Naive thymus-derived CD4-positive, alpha-beta T cell (primary cell): ENCODE measurements at regions of chr4 and their contacts with region 1.

Region 1: GRCh38 chr4:67545199-67546003 is at the start of gene CENPC:
- DNase-seq: peak; percentile 74 to 91 (median 87)
- ATAC-seq: peak; percentile 94
- H3K4me3 ChIP-seq: peak within 1 kb of the TSS; percentile 94
- H3K4me3 Mint-ChIP-seq: peak within 1 kb of the TSS; percentile 92 to 100 (median 98)
- H3K27ac ChIP-seq: peak within 1 kb of the TSS; percentile 98
- H3K27ac Mint-ChIP-seq: peak within 1 kb of the TSS; percentile 98 to 100 (median 100)
- H3K4me1 ChIP-seq: peaks cover 5 to 24% of the 10 kb centered on the region in 2 donors
- H3K4me1 Mint-ChIP-seq: peaks cover 16 to 60% (median 41%) of the 10 kb centered on the region in 7 donors
- H3K27me3 ChIP-seq: no peaks in the 10 kb centered on the region
- H3K27me3 Mint-ChIP-seq: no peaks in the 10 kb centered on the region
- total RNA-seq, gene CENPC: 33.9 to 89.7 (median 63.8) TPM

Region 2: GRCh38 chr4:67522851-67523671 is 22.3 kb before region 1 on chr4:
- CTCF ChIA-PET with region 1: interaction called, 3 read pairs
- POLR2A ChIA-PET with region 1: interaction called, 4 read pairs
- intact Hi-C with region 1: loop called in 1 of 2 experiments (anchors 1 kb)
- DNase-seq: peak in 1 of 9 donors; percentile 35
- ATAC-seq: peak; percentile 64
- H3K4me3 ChIP-seq: no peak overlapping the region
- H3K4me3 Mint-ChIP-seq: peak overlapping the region in 5 of 10 donors; percentile 12 to 57 (median 27)
- H3K27ac ChIP-seq: no peak overlapping the region
- H3K27ac Mint-ChIP-seq: peak overlapping the region in 7 of 9 donors; percentile 24 to 94 (median 48)
- H3K4me1 ChIP-seq: peaks cover 0 to 4% of the 10 kb centered on the region in 2 donors
- H3K4me1 Mint-ChIP-seq: peaks cover 46 to 82% (median 60%) of the 10 kb centered on the region in 7 donors
- H3K27me3 ChIP-seq: no peaks in the 10 kb centered on the region
- H3K27me3 Mint-ChIP-seq: no peaks in the 10 kb centered on the region

Region 3: GRCh38 chr4:67581208-67581857 is 35.9 kb after region 1 on chr4:
- CTCF ChIA-PET with region 1: interaction called, 10 read pairs
- POLR2A ChIA-PET with region 1: interaction called, 16 read pairs
- intact Hi-C with region 1: loop called (anchors 1 kb)
- DNase-seq: peak in 7 of 9 donors; percentile 61 to 77 (median 69)
- ATAC-seq: peak; percentile 95
- H3K4me3 ChIP-seq: peak overlapping the region; percentile 10
- H3K4me3 Mint-ChIP-seq: peak overlapping the region; percentile 34 to 92 (median 76)
- H3K27ac ChIP-seq: peak overlapping the region; percentile 28
- H3K27ac Mint-ChIP-seq: peak overlapping the region; percentile 55 to 93 (median 87)
- H3K4me1 ChIP-seq: peaks cover 8 to 26% of the 10 kb centered on the region in 2 donors
- H3K4me1 Mint-ChIP-seq: peaks cover 22 to 73% (median 56%) of the 10 kb centered on the region in 7 donors
- H3K27me3 ChIP-seq: no peaks in the 10 kb centered on the region
- H3K27me3 Mint-ChIP-seq: no peaks in the 10 kb centered on the region

Region 4: GRCh38 chr4:67668315-67668714 is 122.9 kb after region 1 on chr4:
- CTCF ChIA-PET with region 1: no interaction called
- POLR2A ChIA-PET with region 1: no interaction called
- intact Hi-C with region 1: loop called in 1 of 2 experiments (anchors 2 kb)
- DNase-seq: no peak
- ATAC-seq: no peak
- H3K4me3 ChIP-seq: no peak overlapping the region
- H3K4me3 Mint-ChIP-seq: no peak overlapping the region
- H3K27ac ChIP-seq: no peak overlapping the region
- H3K27ac Mint-ChIP-seq: no peak overlapping the region
- H3K4me1 ChIP-seq: no peaks in the 10 kb centered on the region
- H3K4me1 Mint-ChIP-seq: peaks cover 0 to 4% (median 0%) of the 10 kb centered on the region in 7 donors
- H3K27me3 ChIP-seq: no peaks in the 10 kb centered on the region
- H3K27me3 Mint-ChIP-seq: no peaks in the 10 kb centered on the region

Region 5: GRCh38 chr4:67762086-67762485 is 216.7 kb after region 1 on chr4:
- CTCF ChIA-PET with region 1: no interaction called
- POLR2A ChIA-PET with region 1: no interaction called
- intact Hi-C with region 1: loop called in 1 of 2 experiments (anchors 5 kb)
- DNase-seq: peak in 3 of 9 donors; percentile 0 to 11 (median 2)
- ATAC-seq: no peak
- H3K4me3 ChIP-seq: no peak overlapping the region
- H3K4me3 Mint-ChIP-seq: peak overlapping the region in 1 of 10 donors; percentile 38
- H3K27ac ChIP-seq: no peak overlapping the region
- H3K27ac Mint-ChIP-seq: peak overlapping the region in 2 of 9 donors; percentile 18 to 54
- H3K4me1 ChIP-seq: no peaks in the 10 kb centered on the region
- H3K4me1 Mint-ChIP-seq: peaks cover 4 to 6% (median 4%) of the 10 kb centered on the region in 7 donors
- H3K27me3 ChIP-seq: no peaks in the 10 kb centered on the region
- H3K27me3 Mint-ChIP-seq: no peaks in the 10 kb centered on the region

Region 6: GRCh38 chr4:67869580-67870190 is 324.3 kb after region 1 on chr4:
- CTCF ChIA-PET with region 1: no interaction called
- POLR2A ChIA-PET with region 1: no interaction called
- intact Hi-C with region 1: no loop called
- DNase-seq: no peak
- ATAC-seq: no peak
- H3K4me3 ChIP-seq: no peak overlapping the region
- H3K4me3 Mint-ChIP-seq: no peak overlapping the region
- H3K27ac ChIP-seq: no peak overlapping the region
- H3K27ac Mint-ChIP-seq: no peak overlapping the region
- H3K4me1 ChIP-seq: no peaks in the 10 kb centered on the region
- H3K4me1 Mint-ChIP-seq: no peaks in the 10 kb centered on the region
- H3K27me3 ChIP-seq: no peaks in the 10 kb centered on the region
- H3K27me3 Mint-ChIP-seq: peaks cover 0 to 33% (median 13%) of the 10 kb centered on the region in 5 donors

Region 7: DNA sequence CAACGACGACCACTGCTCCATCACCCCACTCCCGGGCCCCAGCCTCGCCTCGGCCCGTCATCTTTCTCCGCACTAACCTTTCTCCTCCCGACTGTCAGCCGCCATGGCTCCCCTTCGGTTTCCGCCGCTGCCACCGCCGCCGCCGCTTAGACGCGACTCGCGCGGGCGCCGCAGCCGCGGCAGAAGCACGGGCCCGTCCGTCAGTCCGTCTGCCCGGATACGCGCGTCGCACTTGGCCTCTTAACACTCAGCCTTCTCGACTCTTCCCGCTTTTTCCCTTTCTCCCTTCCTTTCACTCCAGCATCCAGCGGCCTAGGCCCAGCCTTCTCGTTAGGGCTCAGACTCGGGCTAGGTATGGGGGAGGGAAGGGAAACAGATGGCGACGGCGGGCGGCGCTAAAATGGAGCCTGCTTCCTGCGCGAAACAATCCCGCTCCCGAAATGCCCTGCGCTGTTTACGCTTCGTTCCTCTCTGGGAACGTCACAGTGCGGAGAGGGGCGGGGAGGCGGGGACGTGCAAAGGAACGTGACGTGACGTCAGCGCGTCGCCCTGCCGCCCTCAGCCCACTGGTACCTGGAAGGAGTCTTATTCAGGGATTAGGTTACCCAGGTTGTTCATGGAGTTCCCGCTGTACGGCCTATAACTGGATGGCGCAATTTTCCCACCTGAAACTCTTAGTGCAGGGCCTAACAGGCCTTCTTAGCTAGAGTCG is 804.4 kb after region 1 on chr4 and contains the start of gene YTHDC1:
- CTCF ChIA-PET with region 1: no interaction called
- POLR2A ChIA-PET with region 1: interaction called, 3 read pairs
- intact Hi-C with region 1: loop called (anchors 1 kb)
- DNase-seq: peak; percentile 84 to 97 (median 95)
- ATAC-seq: peak; percentile 97
- H3K4me3 ChIP-seq: peak within 1 kb of the TSS; percentile 100
- H3K4me3 Mint-ChIP-seq: peak within 1 kb of the TSS; percentile 94 to 100 (median 98)
- H3K27ac ChIP-seq: peak within 1 kb of the TSS; percentile 96
- H3K27ac Mint-ChIP-seq: peak within 1 kb of the TSS; percentile 97 to 100 (median 100)
- H3K4me1 ChIP-seq: peaks cover 26 to 35% of the 10 kb centered on the region in 2 donors
- H3K4me1 Mint-ChIP-seq: peaks cover 16 to 48% (median 41%) of the 10 kb centered on the region in 7 donors
- H3K27me3 ChIP-seq: no peaks in the 10 kb centered on the region
- H3K27me3 Mint-ChIP-seq: peaks cover 0 to 20% (median 0%) of the 10 kb centered on the region in 5 donors
- total RNA-seq, gene YTHDC1: 99.4 to 254 (median 219) TPM